Transverse colon (tissue), 4 donors: ENCODE measurements at regions of chr12 and their contacts with region 1.

Region 1: DNA sequence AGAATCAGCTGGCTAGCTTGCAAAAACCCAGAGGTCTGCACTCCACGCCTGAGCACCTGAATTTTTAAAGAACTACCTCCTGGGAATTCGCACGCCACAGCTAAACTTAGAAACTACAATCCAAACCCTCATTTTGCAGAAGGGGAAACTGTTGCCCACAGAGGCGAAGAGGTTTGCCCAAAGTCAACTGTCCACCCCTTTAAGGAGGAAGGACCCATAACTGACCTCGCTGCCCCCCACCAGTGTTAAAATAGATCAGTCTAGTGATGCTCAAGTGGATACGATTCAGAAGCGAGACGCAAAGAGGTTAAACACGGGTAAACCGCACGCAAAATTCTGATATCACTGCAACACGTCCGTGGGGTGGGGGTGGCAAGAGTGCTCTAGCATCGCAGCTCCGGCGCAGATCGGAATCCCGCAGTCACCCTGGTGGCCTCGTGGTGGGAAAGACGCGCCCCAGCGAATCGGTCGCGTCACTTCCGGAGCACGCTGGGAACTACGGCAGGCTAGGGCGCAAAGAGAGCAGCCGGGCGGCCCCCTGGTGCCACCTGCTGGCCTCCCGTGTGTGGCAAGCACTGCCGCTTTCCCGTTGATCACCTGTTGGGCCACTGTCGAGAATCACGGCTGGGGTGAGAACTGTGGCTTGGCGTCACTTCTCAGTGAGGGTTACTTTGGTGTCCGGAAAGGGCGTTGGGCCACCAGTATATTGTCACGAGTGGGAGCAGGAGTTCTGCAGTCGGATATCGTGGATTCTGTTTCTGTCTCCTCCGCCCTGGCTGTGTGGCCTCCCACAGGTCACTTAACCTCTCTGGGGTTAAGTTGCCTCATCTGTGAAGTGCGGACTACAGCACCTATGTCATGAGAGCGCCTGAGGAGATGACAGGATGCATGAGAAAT is at the start of gene ALKBH2:
- DNase-seq: peak; percentile 95
- H3K4me3 ChIP-seq: peak within 1 kb of the TSS; percentile 30 to 54 (median 36)
- H3K27ac ChIP-seq: peak within 1 kb of the TSS; percentile 73 to 83 (median 75)
- H3K4me1 ChIP-seq: peaks cover 15 to 36% (median 22%) of the 10 kb centered on the region in 4 donors
- H3K27me3 ChIP-seq: no peaks in the 10 kb centered on the region
- CTCF ChIP-seq: peak; percentile 96 to 99 (median 98)
- EP300 ChIP-seq: peak; percentile 82
- POLR2A ChIP-seq: peak; percentile 25
- total RNA-seq, gene ALKBH2: 3.4 to 11.1 (median 7.1) TPM in 3 of 4 donors, not detected in the other

Region 2: GRCh38 chr12:108664338-108665258 is 428.7 kb before region 1 on chr12:
- in situ Hi-C with region 1: loop called in 1 of 4 experiments (anchors 25 kb)
- intact Hi-C with region 1: no loop called
- DNase-seq: peak; percentile 89
- H3K4me3 ChIP-seq: no peak overlapping the region
- H3K27ac ChIP-seq: peak overlapping the region; percentile 82 to 93 (median 88)
- H3K4me1 ChIP-seq: peaks cover 26 to 62% (median 50%) of the 10 kb centered on the region in 4 donors
- H3K27me3 ChIP-seq: no peaks in the 10 kb centered on the region
- CTCF ChIP-seq: peak; percentile 82 to 98 (median 90)
- EP300 ChIP-seq: no peak
- POLR2A ChIP-seq: no peak

Region 3: GRCh38 chr12:108995370-108995992 is 97.8 kb before region 1 on chr12:
- in situ Hi-C with region 1: no loop called
- intact Hi-C with region 1: no loop called
- DNase-seq: no peak
- H3K4me3 ChIP-seq: no peak overlapping the region
- H3K27ac ChIP-seq: no peak overlapping the region
- H3K4me1 ChIP-seq: no peaks in the 10 kb centered on the region
- H3K27me3 ChIP-seq: peaks cover 5% of the 10 kb centered on the region
- CTCF ChIP-seq: no peak
- EP300 ChIP-seq: no peak
- POLR2A ChIP-seq: no peak

Region 4: DNA sequence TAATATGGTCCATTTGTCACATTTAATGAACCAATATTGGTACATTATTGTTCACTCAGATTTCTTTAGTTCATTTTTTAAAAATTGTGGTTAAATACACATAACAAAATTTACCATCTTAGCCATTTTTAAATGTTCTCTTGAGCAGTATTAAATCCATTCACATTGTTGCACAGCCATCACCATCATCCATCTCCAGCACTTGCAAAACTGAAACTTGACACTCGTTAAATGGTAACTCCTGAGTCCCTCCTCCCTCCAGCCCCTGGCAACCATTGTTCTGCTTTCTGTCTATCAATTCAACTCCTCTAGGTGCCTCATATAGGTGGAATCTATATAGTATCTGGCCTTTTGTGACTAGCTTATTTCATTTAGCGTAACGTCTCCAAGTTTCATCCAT is 109.5 kb after region 1 on chr12:
- in situ Hi-C with region 1: no loop called
- intact Hi-C with region 1: no loop called
- DNase-seq: no peak
- H3K4me3 ChIP-seq: no peak overlapping the region
- H3K27ac ChIP-seq: no peak overlapping the region
- H3K4me1 ChIP-seq: no peaks in the 10 kb centered on the region
- H3K27me3 ChIP-seq: no peaks in the 10 kb centered on the region
- CTCF ChIP-seq: no peak
- EP300 ChIP-seq: no peak
- POLR2A ChIP-seq: no peak